Activated naive CD4-positive, alpha-beta T cell treated with anti-CD3 and anti-CD28 coated beads for 36 hours (primary cell): ENCODE measurements at regions of chr1 and their contacts with region 1.

Region 1: GRCh38 chr1:35715568-35716002 is 3.1 kb downstream of the C1orf216 start:
- DNase-seq: peak; percentile 88
- H3K4me3 Mint-ChIP-seq: peak overlapping the region; percentile 42
- H3K27ac Mint-ChIP-seq: no peak overlapping the region
- H3K4me1 Mint-ChIP-seq: peaks cover 24% of the 10 kb centered on the region
- H3K27me3 Mint-ChIP-seq: no peaks in the 10 kb centered on the region

Region 2: GRCh38 chr1:35564037-35564883 is 151.3 kb before region 1 on chr1:
- CTCF ChIA-PET with region 1: interaction called, 68 read pairs
- intact Hi-C with region 1: loop called (anchors 1 kb)
- DNase-seq: peak; percentile 92
- H3K4me3 Mint-ChIP-seq: no peak overlapping the region
- H3K27ac Mint-ChIP-seq: no peak overlapping the region
- H3K4me1 Mint-ChIP-seq: peaks cover 16% of the 10 kb centered on the region
- H3K27me3 Mint-ChIP-seq: no peaks in the 10 kb centered on the region

Region 3: DNA sequence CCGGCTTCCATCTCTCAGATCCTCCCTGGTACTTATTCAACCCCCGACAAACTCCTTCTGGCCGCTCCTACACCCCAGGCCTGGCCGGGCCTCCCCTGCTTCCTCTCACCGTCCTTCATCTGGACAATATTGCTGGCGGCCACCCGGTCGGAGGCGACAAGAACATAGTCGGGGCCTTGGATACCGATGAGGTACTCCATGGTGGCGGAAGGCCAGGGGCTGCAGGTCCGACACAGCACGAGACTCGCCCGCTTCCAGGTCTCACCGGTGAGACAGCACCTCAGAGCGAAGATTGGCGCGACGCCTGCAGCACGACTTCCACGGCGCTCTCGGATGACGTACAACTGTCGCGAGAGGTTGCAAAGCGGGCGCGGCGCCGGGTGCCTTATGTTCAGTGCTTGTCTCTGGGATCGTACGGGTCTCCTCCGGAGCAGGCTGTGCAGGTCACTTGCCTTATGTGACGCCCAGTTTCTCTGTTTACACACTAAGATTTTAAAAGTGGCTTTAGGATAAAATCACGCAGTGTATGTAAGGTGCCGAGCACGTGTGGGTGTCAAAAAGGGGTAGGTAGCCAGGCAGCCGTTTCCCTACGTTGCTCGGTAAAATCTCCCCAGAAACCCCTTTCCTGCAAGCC is 74.2 kb before region 1 on chr1 and contains the start of gene PSMB2:
- CTCF ChIA-PET with region 1: interaction called, 7 read pairs
- intact Hi-C with region 1: loop called (anchors 2 kb)
- DNase-seq: peak; percentile 98
- H3K4me3 Mint-ChIP-seq: peak within 1 kb of the TSS; percentile 100
- H3K27ac Mint-ChIP-seq: peak within 1 kb of the TSS; percentile 99
- H3K4me1 Mint-ChIP-seq: peaks cover 30% of the 10 kb centered on the region
- H3K27me3 Mint-ChIP-seq: peaks cover 5% of the 10 kb centered on the region
- total RNA-seq, gene PSMB2: 91.9 to 96.4 TPM

Region 4: GRCh38 chr1:35726450-35727433 is 11.2 kb after region 1 on chr1:
- CTCF ChIA-PET with region 1: interaction called, 69 read pairs
- intact Hi-C with region 1: no loop called
- DNase-seq: peak; percentile 54
- H3K4me3 Mint-ChIP-seq: no peak overlapping the region
- H3K27ac Mint-ChIP-seq: no peak overlapping the region
- H3K4me1 Mint-ChIP-seq: no peaks in the 10 kb centered on the region
- H3K27me3 Mint-ChIP-seq: no peaks in the 10 kb centered on the region